Caco-2 (cell line): ENCODE measurements at regions of chr19 and their contacts with region 1.

Region 1: GRCh38 chr19:1605236-1606137 is at the start of gene UQCR11:
- DNase-seq: peak; percentile 93 to 95
- H3K4me3 ChIP-seq: peak within 1 kb of the TSS; percentile 80
- H3K4me3 Mint-ChIP-seq: peak within 1 kb of the TSS; percentile 96
- H3K27ac Mint-ChIP-seq: peak within 1 kb of the TSS; percentile 97
- H3K4me1 ChIP-seq: peaks cover 17% of the 10 kb centered on the region; the same call in 1 of the 2 replicates
- H3K4me1 Mint-ChIP-seq: no peaks in the 10 kb centered on the region
- H3K27me3 ChIP-seq: no peaks in the 10 kb centered on the region
- H3K27me3 Mint-ChIP-seq: no peaks in the 10 kb centered on the region
- CTCF ChIP-seq: peak; percentile 47 to 60
- total RNA-seq, gene UQCR11: 222 and 238 TPM in 2 replicates

Region 2: GRCh38 chr19:1652471-1653299 is 47.2 kb after region 1 on chr19 and contains the start of gene TCF3:
- CTCF ChIA-PET with region 1: interaction called, 3 read pairs
- POLR2A ChIA-PET with region 1: no interaction called
- intact Hi-C with region 1: loop called (anchors 1 kb)
- DNase-seq: peak; percentile 96 to 98
- H3K4me3 ChIP-seq: peak within 1 kb of the TSS; percentile 66
- H3K4me3 Mint-ChIP-seq: peak within 1 kb of the TSS; percentile 76
- H3K27ac Mint-ChIP-seq: peak within 1 kb of the TSS; percentile 67
- H3K4me1 ChIP-seq: peaks cover under 1% of the 10 kb centered on the region; the same call in 1 of the 2 replicates
- H3K4me1 Mint-ChIP-seq: no peaks in the 10 kb centered on the region
- H3K27me3 ChIP-seq: no peaks in the 10 kb centered on the region
- H3K27me3 Mint-ChIP-seq: no peaks in the 10 kb centered on the region
- CTCF ChIP-seq: no peak
- total RNA-seq, gene TCF3: 147 and 162 TPM in 2 replicates